ENCODE measurements at regions of chr16 and their contacts with region 1.

Region 1: GRCh38 chr16:67521095-67521804 is 7.4 kb upstream of the RIPOR1 start:
- DNase-seq: peak; percentile 92

Region 2: GRCh38 chr16:67480833-67481560 is 40.3 kb before region 1 on chr16 and contains the start of gene ATP6V0D1:
- CTCF ChIA-PET with region 1: interaction called, 12 read pairs
- POLR2A ChIA-PET with region 1: interaction called, 8 read pairs
- DNase-seq: peak; percentile 99

Region 3: GRCh38 chr16:67546761-67547422 is 25.6 kb after region 1 on chr16:
- CTCF ChIA-PET with region 1: interaction called, 14 read pairs
- POLR2A ChIA-PET with region 1: interaction called, 3 read pairs
- DNase-seq: peak; percentile 87

Region 4: GRCh38 chr16:67641779-67642708 is 120.8 kb after region 1 on chr16:
- CTCF ChIA-PET with region 1: interaction called, 35 read pairs
- POLR2A ChIA-PET with region 1: interaction called, 3 read pairs
- DNase-seq: no peak

Region 5: DNA sequence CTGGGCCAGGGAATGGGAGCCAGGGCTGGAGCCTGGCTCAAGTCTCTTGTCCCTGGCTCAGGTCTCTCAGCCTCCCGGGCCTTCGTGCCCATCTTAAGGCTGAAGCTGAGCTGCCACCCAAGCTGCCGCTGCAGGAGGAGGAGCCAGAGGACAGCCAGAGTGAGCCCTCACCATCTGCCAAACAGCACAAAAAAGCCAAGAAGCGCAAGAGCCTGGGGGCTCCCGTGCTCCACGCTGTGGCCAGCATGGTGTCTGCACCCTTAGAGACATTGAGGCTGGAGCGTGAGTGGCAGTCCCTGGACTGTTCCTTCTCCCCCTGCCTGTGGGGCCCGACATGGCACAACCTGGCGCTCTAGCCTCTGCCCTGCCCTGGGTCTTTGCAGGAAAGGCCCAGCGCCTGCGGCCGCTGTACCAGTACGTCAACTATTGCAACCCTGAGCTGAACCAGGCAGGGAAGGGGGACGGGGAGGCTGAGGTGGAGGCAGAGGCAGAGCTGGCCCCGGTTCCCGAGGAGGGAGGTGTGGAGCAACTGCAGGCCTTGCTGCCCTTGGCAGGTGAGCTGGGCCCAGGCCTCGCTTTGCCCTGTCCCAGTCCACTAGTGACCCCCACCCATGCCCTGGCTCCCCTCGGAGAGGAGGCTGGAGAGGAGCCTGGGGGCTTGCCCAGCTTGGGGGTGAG is 146.7 kb after region 1 on chr16:
- CTCF ChIA-PET with region 1: interaction called, 31 read pairs
- POLR2A ChIA-PET with region 1: interaction called, 7 read pairs
- DNase-seq: peak; percentile 85

Measured in HEK293T (cell line).